ENCODE measurements at regions of chr5 and their contacts with region 1.

Region 1: GRCh38 chr5:115634343-115635132 is 8.7 kb upstream of the TMED7 start:
- DNase-seq: peak; percentile 51
- H3K4me3 ChIP-seq: peak overlapping the region; percentile 46
- H3K27ac ChIP-seq: no peak overlapping the region
- H3K27me3 ChIP-seq: peaks cover 4% of the 10 kb centered on the region
- CTCF ChIP-seq: peak; percentile 99

Region 2: DNA sequence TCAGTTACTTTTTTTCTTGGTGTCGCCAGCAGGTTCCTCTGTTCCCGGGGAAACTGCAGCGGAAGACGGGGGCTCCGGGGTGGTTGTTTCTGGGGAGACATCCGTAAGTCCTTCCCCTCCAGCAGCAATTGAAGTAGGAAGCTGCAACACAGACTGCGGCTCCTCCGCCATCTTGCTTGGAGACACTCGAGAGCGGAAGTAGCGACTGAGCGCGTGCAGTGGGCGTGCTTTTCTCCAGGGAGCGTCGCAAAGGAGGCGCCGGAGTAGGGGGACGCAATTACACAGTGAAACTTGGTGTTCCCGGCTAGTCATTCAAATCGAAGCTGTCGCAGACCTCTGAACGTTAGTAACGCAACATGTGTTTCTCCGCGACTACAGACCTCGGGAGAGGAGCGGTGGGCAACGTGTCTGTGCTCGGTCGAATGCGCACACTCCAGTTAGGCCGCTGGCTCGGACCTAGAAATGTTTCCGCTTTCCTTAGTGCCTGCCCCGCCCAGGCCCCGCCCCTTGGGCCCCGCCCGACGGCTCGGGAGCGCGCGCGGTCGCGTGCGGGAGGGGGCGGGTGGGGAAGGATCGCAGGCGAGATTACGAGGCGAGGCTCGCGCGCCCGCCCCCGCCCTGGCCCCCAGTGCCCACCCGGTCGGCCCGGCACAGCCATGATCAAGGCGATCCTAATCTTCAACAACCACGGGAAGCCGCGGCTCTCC is 207.0 kb after region 1 on chr5 and contains the starts of genes AP3S1 and ATG12:
- CTCF ChIA-PET with region 1: interaction called, 11 read pairs
- POLR2A ChIA-PET with region 1: no interaction called
- DNase-seq: peak; percentile 66
- H3K4me3 ChIP-seq: peak within 1 kb of the TSS; percentile 91
- H3K27ac ChIP-seq: peak within 1 kb of the TSS; percentile 89
- H3K27me3 ChIP-seq: no peaks in the 10 kb centered on the region
- CTCF ChIP-seq: no peak
- polyA plus RNA-seq, gene AP3S1: 109 and 171 TPM in 2 replicates
- polyA plus RNA-seq, gene ATG12: 112 and 154 TPM in 2 replicates

Measured in AG04450 (cell line).